PC-3 (cell line): ENCODE measurements at regions of chr6 and their contacts with region 1.

Region 1: GRCh38 chr6:117352466-117353081 is 73.2 kb downstream of the ROS1 start:
- DNase-seq: peak; percentile 68
- ATAC-seq: peak; percentile 67
- H3K4me3 ChIP-seq: no peak overlapping the region
- H3K27ac ChIP-seq: no peak overlapping the region
- H3K4me1 ChIP-seq: peaks cover 4% of the 10 kb centered on the region
- H3K27me3 ChIP-seq: no peaks in the 10 kb centered on the region
- CTCF ChIP-seq: peak; percentile 64

Region 2: GRCh38 chr6:117399924-117400323 is 47.4 kb after region 1 on chr6:
- CTCF ChIA-PET with region 1: interaction called, 3 read pairs
- POLR2A ChIA-PET with region 1: no interaction called
- intact Hi-C with region 1: loop called (anchors 5 kb)
- DNase-seq: peak; percentile 41
- ATAC-seq: peak; percentile 51; the same call in 1 of the 2 replicates
- H3K4me3 ChIP-seq: no peak overlapping the region
- H3K27ac ChIP-seq: no peak overlapping the region
- H3K4me1 ChIP-seq: peaks cover 6% of the 10 kb centered on the region; the same call in 1 of the 2 replicates
- H3K27me3 ChIP-seq: no peaks in the 10 kb centered on the region
- CTCF ChIP-seq: peak; percentile 53